ENCODE measurements at regions of chr1 and their contacts with region 1.

Region 1: GRCh38 chr1:179081687-179082332 is at the start of gene TOR3A:
- DNase-seq: peak; percentile 81
- ATAC-seq: peak; percentile 91
- H3K4me3 ChIP-seq: peak within 1 kb of the TSS; percentile 58 to 86 (median 85)
- H3K27ac ChIP-seq: peak within 1 kb of the TSS; percentile 77
- H3K4me1 ChIP-seq: peaks cover 39% of the 10 kb centered on the region
- H3K27me3 ChIP-seq: no peaks in the 10 kb centered on the region
- CTCF ChIP-seq: no peak
- EP300 ChIP-seq: 0 out of 4 replicates have a peak, but pooled peaks of 1 of the 2 experiments have one; percentile 3
- POLR2A ChIP-seq: peak; percentile 74 to 75
- RAD21 ChIP-seq: peak; percentile 50; the same call in 1 of the 2 replicates
- total RNA-seq, gene TOR3A: 21.2 and 28.4 TPM in 2 replicates

Region 2: DNA sequence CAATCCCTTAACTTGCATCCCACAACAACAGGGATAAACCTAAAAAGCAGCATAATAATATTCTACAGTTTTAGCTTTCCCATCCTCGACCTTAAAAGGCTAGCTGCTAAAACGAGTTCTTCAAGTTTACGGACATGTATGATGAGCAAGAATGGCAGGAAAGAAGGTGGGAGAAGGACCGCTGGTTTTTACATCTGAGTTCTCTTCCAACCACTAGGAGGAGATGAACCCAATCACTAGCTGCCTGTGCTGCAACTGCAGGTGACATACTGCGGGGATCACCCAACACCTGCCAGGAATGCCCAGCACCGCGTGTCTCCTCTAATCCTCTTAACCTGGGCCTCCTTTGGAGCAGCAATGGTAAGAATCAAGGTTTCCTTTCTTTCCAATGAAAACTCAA is 23.5 kb after region 1 on chr1:
- CTCF ChIA-PET with region 1: no interaction called
- POLR2A ChIA-PET with region 1: interaction called, 6 read pairs
- in situ Hi-C with region 1: no loop called
- intact Hi-C with region 1: loop called (anchors 1 kb)
- DNase-seq: peak; percentile 55
- ATAC-seq: peak; percentile 79
- H3K4me3 ChIP-seq: no peak overlapping the region; a peak in 1 of 6 replicates
- H3K27ac ChIP-seq: peak overlapping the region; percentile 66
- H3K4me1 ChIP-seq: peaks cover 57% of the 10 kb centered on the region
- H3K27me3 ChIP-seq: no peaks in the 10 kb centered on the region
- CTCF ChIP-seq: peak; percentile 72
- EP300 ChIP-seq: no peak
- POLR2A ChIP-seq: no peak
- RAD21 ChIP-seq: no peak; the same call in 1 of the 2 replicates

Region 3: GRCh38 chr1:179121159-179121938 is 39.5 kb after region 1 on chr1:
- CTCF ChIA-PET with region 1: interaction called, 3 read pairs
- POLR2A ChIA-PET with region 1: no interaction called
- in situ Hi-C with region 1: no loop called
- intact Hi-C with region 1: loop called (anchors 5 kb)
- DNase-seq: peak; percentile 25
- ATAC-seq: peak; percentile 48
- H3K4me3 ChIP-seq: no peak overlapping the region
- H3K27ac ChIP-seq: no peak overlapping the region
- H3K4me1 ChIP-seq: no peaks in the 10 kb centered on the region
- H3K27me3 ChIP-seq: no peaks in the 10 kb centered on the region
- CTCF ChIP-seq: peak; percentile 62
- EP300 ChIP-seq: no peak
- POLR2A ChIP-seq: no peak
- RAD21 ChIP-seq: peak; percentile 55

Region 4: GRCh38 chr1:179190861-179191260 is 109.1 kb after region 1 on chr1:
- CTCF ChIA-PET with region 1: interaction called, 3 read pairs
- POLR2A ChIA-PET with region 1: no interaction called
- in situ Hi-C with region 1: no loop called
- intact Hi-C with region 1: loop called (anchors 2 kb)
- DNase-seq: no peak
- ATAC-seq: no peak
- H3K4me3 ChIP-seq: no peak overlapping the region
- H3K27ac ChIP-seq: no peak overlapping the region
- H3K4me1 ChIP-seq: peaks cover 21% of the 10 kb centered on the region
- H3K27me3 ChIP-seq: no peaks in the 10 kb centered on the region
- CTCF ChIP-seq: no peak
- EP300 ChIP-seq: no peak
- POLR2A ChIP-seq: no peak
- RAD21 ChIP-seq: no peak

Region 5: DNA sequence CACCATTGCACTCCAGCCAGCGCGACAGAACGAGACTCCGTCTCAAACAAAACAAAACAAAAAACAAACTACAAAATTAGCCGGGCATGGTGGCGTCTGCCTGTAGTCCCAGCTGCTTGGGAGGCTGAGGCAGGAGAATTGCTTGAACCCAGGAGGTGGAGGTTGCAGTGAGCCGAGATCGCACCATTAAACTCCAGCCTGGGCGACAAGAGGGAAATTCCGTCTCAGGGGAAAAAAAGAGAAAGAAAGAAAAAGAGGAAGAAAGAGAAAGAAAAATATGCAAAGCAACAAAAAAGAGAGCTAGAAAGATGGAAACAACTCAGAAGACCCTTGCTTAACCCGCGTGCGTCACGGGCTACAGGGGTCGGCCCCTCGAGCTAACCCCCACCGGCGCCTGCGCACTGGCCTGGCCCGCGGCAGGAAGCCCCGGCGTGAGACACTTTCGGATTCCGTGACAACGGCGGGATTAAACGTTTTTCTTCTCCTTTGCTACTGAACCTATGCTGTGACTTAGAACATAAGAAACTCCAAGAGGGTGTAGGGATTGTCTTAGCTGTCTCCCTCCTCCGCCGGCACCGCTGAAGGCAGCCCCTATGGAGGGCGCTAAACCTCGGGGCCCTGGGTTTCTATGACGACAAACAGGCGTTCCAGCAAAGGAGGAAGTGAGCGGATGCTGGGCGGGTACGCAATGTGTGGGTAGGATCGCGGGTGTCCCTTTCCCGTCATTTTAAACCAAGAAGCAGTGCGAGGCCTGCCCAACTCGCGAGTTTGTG is 283.7 kb after region 1 on chr1 and contains the start of gene AXDND1:
- CTCF ChIA-PET with region 1: interaction called, 8 read pairs
- POLR2A ChIA-PET with region 1: interaction called, 6 read pairs
- in situ Hi-C with region 1: loop called (anchors 10 kb)
- intact Hi-C with region 1: no loop called
- DNase-seq: peak; percentile 68
- ATAC-seq: peak; percentile 93
- H3K4me3 ChIP-seq: peak within 1 kb of the TSS; percentile 63 to 86 (median 73)
- H3K27ac ChIP-seq: peak within 1 kb of the TSS; percentile 65
- H3K4me1 ChIP-seq: peaks cover 18% of the 10 kb centered on the region; the same call in 1 of the 2 replicates
- H3K27me3 ChIP-seq: no peaks in the 10 kb centered on the region
- CTCF ChIP-seq: peak; percentile 33; the same call in 1 of the 2 replicates
- EP300 ChIP-seq: no peak
- POLR2A ChIP-seq: peak; percentile 30 to 74; a peak in 2 of 4 replicates
- RAD21 ChIP-seq: no peak
- total RNA-seq, gene AXDND1: 0.14 and 0.40 TPM in 2 replicates

Region 6: DNA sequence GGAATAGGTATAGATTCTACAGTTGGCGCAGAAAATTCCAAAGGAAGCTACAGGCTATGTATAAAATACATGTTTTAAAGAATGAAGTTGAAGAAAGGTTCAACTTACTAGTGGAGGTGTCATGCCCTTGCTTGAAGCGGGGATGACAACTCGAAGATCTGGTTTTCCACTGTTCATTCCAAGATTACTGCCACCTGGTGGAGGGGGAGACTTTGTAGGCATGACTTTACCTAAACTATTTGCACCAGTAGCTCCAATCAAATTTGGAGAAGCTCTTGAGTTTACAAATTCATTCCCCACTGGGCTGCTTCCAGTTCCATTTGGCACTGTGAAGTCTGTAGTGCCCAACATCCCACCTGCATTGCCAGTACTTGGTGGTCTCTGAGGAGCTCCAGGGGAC is 365.7 kb after region 1 on chr1:
- CTCF ChIA-PET with region 1: interaction called, 3 read pairs
- POLR2A ChIA-PET with region 1: no interaction called
- in situ Hi-C with region 1: no loop called
- intact Hi-C with region 1: loop called (anchors 2 kb)
- DNase-seq: peak; percentile 35
- ATAC-seq: no peak; the same call in 2 of the 3 replicates
- H3K4me3 ChIP-seq: no peak overlapping the region
- H3K27ac ChIP-seq: no peak overlapping the region
- H3K4me1 ChIP-seq: no peaks in the 10 kb centered on the region
- H3K27me3 ChIP-seq: no peaks in the 10 kb centered on the region; a peak in 1 of 5 replicates
- CTCF ChIP-seq: peak; percentile 37
- EP300 ChIP-seq: no peak
- POLR2A ChIP-seq: no peak
- RAD21 ChIP-seq: no peak

Measured in HepG2 (cell line).